MCF 10A (cell line): ENCODE measurements at regions of chr17 and their contacts with region 1.

Region 1: GRCh38 chr17:17041571-17042380 is 481 bp upstream of the MPRIP start:
- DNase-seq: peak; percentile 97
- H3K4me3 Mint-ChIP-seq: peak overlapping the region; percentile 94
- H3K27ac Mint-ChIP-seq: peak overlapping the region; percentile 62
- H3K4me1 Mint-ChIP-seq: peaks cover 31% of the 10 kb centered on the region
- H3K27me3 Mint-ChIP-seq: no peaks in the 10 kb centered on the region
- CTCF ChIP-seq: no peak

Region 2: GRCh38 chr17:16954521-16954920 is 87.3 kb before region 1 on chr17:
- CTCF ChIA-PET with region 1: no interaction called
- POLR2A ChIA-PET with region 1: no interaction called
- intact Hi-C with region 1: no loop called
- DNase-seq: no peak
- H3K4me3 Mint-ChIP-seq: no peak overlapping the region
- H3K27ac Mint-ChIP-seq: no peak overlapping the region
- H3K4me1 Mint-ChIP-seq: no peaks in the 10 kb centered on the region
- H3K27me3 Mint-ChIP-seq: peaks cover 76% of the 10 kb centered on the region
- CTCF ChIP-seq: no peak

Region 3: DNA sequence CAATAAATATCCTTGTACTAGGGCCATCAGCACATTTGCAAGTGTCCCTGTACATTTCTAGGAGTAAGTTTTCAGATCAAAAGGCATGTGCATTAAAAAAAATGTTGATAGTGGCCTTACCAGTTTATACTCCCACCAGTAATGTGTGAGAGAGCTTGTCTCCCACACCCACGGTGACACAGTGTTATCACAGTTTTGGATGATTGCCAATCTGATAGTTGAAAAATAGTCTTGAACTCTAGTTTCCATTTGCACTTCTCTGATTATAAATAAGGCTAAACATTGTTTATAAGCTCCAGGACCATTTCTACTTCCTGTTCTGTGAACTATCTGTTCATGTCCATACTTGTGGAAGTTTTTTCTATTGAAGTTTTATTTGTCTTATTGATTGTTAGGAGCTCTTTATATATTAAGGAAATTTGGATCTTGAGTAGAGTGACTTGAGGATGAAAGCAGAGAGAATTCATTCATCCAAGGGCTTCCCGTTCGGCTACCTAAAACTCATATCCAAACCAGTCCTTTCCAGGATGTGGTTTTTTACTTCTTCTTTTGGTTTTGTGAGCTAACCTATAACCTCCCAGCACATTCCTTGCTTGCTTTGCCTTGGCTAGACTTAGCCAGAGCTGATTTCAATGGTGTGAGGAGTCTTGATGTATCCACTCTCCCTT is 25.4 kb before region 1 on chr17:
- CTCF ChIA-PET with region 1: interaction called, 6 read pairs
- POLR2A ChIA-PET with region 1: interaction called, 25 read pairs
- intact Hi-C with region 1: loop called (anchors 2 kb)
- DNase-seq: no peak
- H3K4me3 Mint-ChIP-seq: no peak overlapping the region
- H3K27ac Mint-ChIP-seq: no peak overlapping the region
- H3K4me1 Mint-ChIP-seq: peaks cover 25% of the 10 kb centered on the region
- H3K27me3 Mint-ChIP-seq: no peaks in the 10 kb centered on the region
- CTCF ChIP-seq: no peak

Region 4: GRCh38 chr17:17028059-17028877 is 13.5 kb before region 1 on chr17:
- CTCF ChIA-PET with region 1: no interaction called
- POLR2A ChIA-PET with region 1: interaction called, 57 read pairs
- intact Hi-C with region 1: no loop called
- DNase-seq: peak; percentile 97
- H3K4me3 Mint-ChIP-seq: no peak overlapping the region
- H3K27ac Mint-ChIP-seq: peak overlapping the region; percentile 92
- H3K4me1 Mint-ChIP-seq: peaks cover 38% of the 10 kb centered on the region
- H3K27me3 Mint-ChIP-seq: no peaks in the 10 kb centered on the region
- CTCF ChIP-seq: no peak

Region 5: GRCh38 chr17:17055286-17056155 is 13.7 kb after region 1 on chr17:
- CTCF ChIA-PET with region 1: interaction called, 4 read pairs
- POLR2A ChIA-PET with region 1: interaction called, 26 read pairs
- intact Hi-C with region 1: no loop called
- DNase-seq: peak; percentile 47
- H3K4me3 Mint-ChIP-seq: peak overlapping the region; percentile 44
- H3K27ac Mint-ChIP-seq: peak overlapping the region; percentile 94
- H3K4me1 Mint-ChIP-seq: peaks cover 39% of the 10 kb centered on the region
- H3K27me3 Mint-ChIP-seq: no peaks in the 10 kb centered on the region
- CTCF ChIP-seq: no peak

Region 6: DNA sequence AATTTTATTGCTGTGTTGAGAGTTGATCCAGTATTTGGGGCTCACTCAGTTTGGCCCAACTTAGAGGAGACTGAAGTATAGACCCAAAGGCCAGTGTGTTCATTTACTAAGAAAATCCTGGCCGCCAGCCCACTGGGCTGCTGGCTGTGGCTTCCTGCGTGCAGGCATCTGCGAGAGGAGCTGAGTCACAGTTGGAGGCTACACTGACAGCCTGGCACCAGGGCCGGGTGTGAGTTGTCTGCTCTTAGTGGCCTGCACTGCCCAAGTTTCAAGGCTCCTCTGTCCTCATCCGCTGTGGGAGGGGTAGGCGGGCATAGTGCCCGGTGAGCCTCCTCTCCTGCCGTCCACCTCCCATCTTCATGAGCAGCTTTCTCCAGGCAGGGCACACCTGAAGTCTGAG is 110.2 kb after region 1 on chr17:
- CTCF ChIA-PET with region 1: no interaction called
- POLR2A ChIA-PET with region 1: interaction called, 3 read pairs
- intact Hi-C with region 1: loop called (anchors 5 kb)
- DNase-seq: peak; percentile 95
- H3K4me3 Mint-ChIP-seq: no peak overlapping the region
- H3K27ac Mint-ChIP-seq: peak overlapping the region; percentile 75
- H3K4me1 Mint-ChIP-seq: peaks cover 33% of the 10 kb centered on the region
- H3K27me3 Mint-ChIP-seq: no peaks in the 10 kb centered on the region
- CTCF ChIP-seq: no peak